ENCODE measurements at regions of chrX and their contacts with region 1.

Region 1: DNA sequence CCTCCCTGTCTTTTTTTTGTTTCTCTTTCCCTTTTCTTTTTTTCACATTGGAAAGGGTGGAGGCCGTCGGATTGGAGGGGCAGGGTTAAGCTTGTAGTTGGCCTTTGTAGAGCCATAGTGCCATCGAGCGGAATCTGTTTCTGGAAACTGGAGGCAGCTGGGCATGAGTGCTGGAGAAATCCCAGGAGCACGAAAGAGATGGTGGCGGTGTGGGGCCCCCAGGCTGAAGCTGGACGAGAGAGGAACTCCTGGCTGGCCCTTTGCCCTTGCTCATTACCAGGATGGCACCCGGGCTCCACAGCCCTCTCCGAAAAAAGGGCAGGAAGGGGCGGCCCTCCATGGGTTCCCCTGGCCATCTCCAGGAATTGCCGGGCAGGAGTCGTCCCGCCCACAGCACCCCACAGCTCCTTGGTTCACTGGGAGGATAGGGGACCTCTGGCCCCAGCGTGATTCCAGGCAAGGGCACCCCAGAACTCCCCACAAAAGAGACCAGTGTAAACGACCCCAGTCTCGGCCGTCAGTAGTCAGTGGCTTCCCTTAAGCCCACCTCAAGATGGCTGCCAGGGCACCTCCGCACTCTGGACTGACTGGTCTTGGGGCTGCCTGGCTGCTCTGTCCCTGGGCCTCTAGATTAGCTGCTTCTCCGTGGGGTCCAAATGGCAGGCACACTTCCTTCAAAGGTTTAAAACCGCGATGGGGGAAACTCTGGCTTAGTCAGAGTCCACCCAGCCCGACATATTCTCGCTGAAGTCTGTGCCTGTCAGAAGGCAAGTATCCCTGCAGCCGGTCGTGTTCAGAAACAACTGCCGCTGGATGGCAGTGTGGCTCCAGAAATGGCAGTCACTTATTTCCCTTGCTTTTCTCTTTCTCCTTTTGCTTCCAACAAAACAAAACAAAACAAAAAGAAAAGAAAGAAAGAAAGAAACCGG is 74.1 kb downstream of the NBDY start:
- DNase-seq: peak; percentile 80
- H3K4me3 ChIP-seq: peak overlapping the region; percentile 47
- H3K27ac ChIP-seq: peak overlapping the region; percentile 79
- H3K4me1 ChIP-seq: no peaks in the 10 kb centered on the region
- H3K27me3 ChIP-seq: no peaks in the 10 kb centered on the region
- CTCF ChIP-seq: peak; percentile 79

Region 2: DNA sequence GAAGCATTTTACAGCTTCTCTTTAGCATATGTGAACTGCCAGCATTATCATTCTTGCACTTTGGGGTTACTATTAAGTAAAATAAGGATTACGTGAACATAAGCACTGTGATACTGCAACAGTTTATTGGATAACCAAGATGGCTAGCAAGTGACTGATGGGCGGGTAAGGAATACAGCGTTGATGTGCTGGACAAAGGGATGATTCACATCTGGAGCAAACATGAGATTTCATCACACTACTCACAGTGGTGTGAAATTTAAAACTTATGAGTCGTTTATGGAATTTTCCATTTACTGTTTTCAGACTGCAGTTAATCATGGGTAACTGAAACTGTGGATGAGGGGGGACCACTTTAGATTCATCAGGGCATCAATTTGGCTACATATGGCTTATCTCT is 58.2 kb before region 1 on chrX:
- CTCF ChIA-PET with region 1: no interaction called
- POLR2A ChIA-PET with region 1: no interaction called
- intact Hi-C with region 1: loop called (anchors 10 kb)
- DNase-seq: peak; percentile 17
- H3K4me3 ChIP-seq: no peak overlapping the region
- H3K27ac ChIP-seq: no peak overlapping the region
- H3K4me1 ChIP-seq: no peaks in the 10 kb centered on the region
- H3K27me3 ChIP-seq: no peaks in the 10 kb centered on the region
- CTCF ChIP-seq: no peak

Region 3: DNA sequence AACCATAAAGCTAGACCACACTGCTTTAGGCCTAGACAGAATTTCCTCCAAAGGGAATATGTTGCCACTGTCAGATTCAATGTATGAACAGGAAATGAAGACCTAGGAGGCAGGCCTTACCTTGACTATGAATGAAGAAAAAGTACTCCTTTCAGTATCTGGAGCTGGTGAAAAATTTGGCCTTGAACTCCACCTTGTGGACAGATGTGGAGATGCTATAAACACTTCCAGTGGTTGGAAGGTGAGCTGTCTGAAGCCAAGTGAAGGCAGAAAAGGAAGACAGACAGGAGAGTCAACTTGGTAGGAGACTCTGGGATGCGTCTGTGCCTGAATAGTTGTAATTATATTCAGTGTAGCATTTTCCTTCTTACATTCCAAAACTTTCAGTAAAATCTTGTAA is 175.0 kb after region 1 on chrX:
- CTCF ChIA-PET with region 1: interaction called, 4 read pairs
- POLR2A ChIA-PET with region 1: no interaction called
- intact Hi-C with region 1: loop called (anchors 1 kb)
- DNase-seq: peak; percentile 57
- H3K4me3 ChIP-seq: no peak overlapping the region
- H3K27ac ChIP-seq: no peak overlapping the region
- H3K4me1 ChIP-seq: no peaks in the 10 kb centered on the region
- H3K27me3 ChIP-seq: peaks cover 4% of the 10 kb centered on the region
- CTCF ChIP-seq: peak; percentile 66

Region 4: GRCh38 chrX:57453901-57454300 is 650.7 kb after region 1 on chrX:
- CTCF ChIA-PET with region 1: no interaction called
- POLR2A ChIA-PET with region 1: no interaction called
- intact Hi-C with region 1: loop called (anchors 10 kb)
- DNase-seq: peak; percentile 39
- H3K4me3 ChIP-seq: no peak overlapping the region
- H3K27ac ChIP-seq: no peak overlapping the region
- H3K4me1 ChIP-seq: no peaks in the 10 kb centered on the region
- H3K27me3 ChIP-seq: no peaks in the 10 kb centered on the region
- CTCF ChIP-seq: peak; percentile 63

Region 5: GRCh38 chrX:57821703-57822375 is 1018.7 kb after region 1 on chrX:
- CTCF ChIA-PET with region 1: no interaction called
- POLR2A ChIA-PET with region 1: no interaction called
- intact Hi-C with region 1: loop called (anchors 10 kb)
- DNase-seq: peak; percentile 81
- H3K4me3 ChIP-seq: peak overlapping the region; percentile 36
- H3K27ac ChIP-seq: no peak overlapping the region
- H3K4me1 ChIP-seq: no peaks in the 10 kb centered on the region
- H3K27me3 ChIP-seq: no peaks in the 10 kb centered on the region
- CTCF ChIP-seq: peak; percentile 70

Region 6: DNA sequence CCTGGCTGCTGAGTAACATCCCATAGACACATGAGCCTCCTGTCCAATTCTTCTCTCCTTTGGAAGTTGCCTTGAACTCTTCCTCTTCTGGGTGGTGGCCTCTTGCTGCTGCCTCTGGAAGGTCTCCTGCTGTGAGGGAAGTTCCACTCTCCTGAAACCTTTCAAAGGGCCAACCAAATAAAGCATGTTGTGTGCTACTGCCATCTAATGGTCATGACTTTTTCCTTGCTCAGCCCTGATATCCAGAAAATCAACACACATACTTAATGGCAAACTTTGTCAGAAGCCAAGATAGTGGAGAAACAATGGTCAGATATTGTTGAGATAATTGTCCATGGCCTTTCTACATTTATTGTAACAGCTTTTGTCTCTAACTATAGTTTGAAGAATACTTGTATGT is 1126.2 kb after region 1 on chrX:
- CTCF ChIA-PET with region 1: no interaction called
- POLR2A ChIA-PET with region 1: no interaction called
- intact Hi-C with region 1: loop called (anchors 10 kb)
- DNase-seq: peak; percentile 67
- H3K4me3 ChIP-seq: no peak overlapping the region
- H3K27ac ChIP-seq: no peak overlapping the region
- H3K4me1 ChIP-seq: no peaks in the 10 kb centered on the region
- H3K27me3 ChIP-seq: no peaks in the 10 kb centered on the region
- CTCF ChIP-seq: peak; percentile 66

Region 7: DNA sequence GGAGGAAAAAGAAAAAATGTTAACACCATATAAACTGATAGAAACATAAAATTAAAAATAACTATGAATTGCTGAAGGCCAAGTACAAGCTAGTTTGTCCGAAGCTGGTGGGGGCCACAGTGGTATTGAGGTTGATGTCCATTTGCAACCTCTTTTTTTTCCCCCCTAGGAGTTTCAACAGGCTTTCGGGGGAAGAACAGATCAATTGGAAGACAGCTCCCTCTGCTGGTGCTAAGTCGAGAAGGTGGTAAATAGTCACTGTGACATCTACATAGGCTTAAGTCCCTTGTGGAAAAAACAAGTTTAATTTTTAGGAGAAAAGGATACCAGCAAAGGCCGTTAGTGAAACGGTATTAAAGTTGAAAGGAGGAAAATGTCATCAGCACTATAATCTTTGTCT is 1222.8 kb after region 1 on chrX:
- CTCF ChIA-PET with region 1: no interaction called
- POLR2A ChIA-PET with region 1: no interaction called
- intact Hi-C with region 1: loop called (anchors 10 kb)
- DNase-seq: peak; percentile 52
- H3K4me3 ChIP-seq: no peak overlapping the region
- H3K27ac ChIP-seq: no peak overlapping the region
- H3K4me1 ChIP-seq: no peaks in the 10 kb centered on the region
- H3K27me3 ChIP-seq: no peaks in the 10 kb centered on the region
- CTCF ChIP-seq: peak; percentile 73

Measured in A673 (cell line).